H1 (cell line): ENCODE measurements at regions of chr5 and their contacts with region 1.

Region 1: GRCh38 chr5:149990518-149991376 is 9.7 kb downstream of the TIGD6 start:
- DNase-seq: peak in 1 of 2 experiments; percentile 65
- H3K4me3 ChIP-seq: no peak overlapping the region
- H3K27ac ChIP-seq: no peak overlapping the region
- H3K4me1 ChIP-seq: no peaks in the 10 kb centered on the region
- H3K27me3 ChIP-seq: no peaks in the 10 kb centered on the region
- CTCF ChIP-seq: peak; percentile 53 to 92 (median 89)
- EP300 ChIP-seq: no peak
- POLR2A ChIP-seq: no peak
- RAD21 ChIP-seq: peak; percentile 98

Region 2: DNA sequence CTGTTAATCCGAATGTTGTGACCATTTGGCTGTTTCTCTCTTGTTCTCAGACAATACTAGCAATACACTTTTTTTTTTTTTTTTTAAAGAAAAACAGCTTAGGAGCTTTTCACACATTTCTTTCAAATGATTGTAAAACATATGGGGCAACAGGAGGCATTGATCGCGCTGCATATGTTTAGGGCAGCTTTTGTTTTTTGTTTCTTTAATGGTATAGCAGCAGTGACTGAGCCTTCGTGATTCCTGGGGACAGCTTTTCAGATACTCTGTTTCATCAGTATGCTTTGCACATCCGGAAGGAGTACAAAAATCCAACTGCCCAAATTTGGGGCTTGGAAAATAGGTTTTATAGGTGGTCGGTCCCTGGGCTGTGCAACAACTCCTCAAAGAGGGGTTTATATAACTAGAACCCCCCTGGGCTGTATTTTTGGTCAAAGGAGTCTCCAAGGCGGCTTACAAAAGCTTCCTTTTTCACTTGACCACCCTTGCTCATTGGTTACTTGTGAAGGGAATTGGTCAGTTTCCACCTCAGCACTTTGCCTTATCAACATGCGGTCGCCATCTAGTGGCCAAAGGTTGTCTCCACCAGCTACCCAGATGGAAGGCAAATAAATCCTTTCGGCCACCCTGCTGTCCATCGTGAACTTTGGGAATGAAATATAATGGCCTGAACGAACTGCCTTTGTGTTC is 138.0 kb before region 1 on chr5:
- CTCF ChIA-PET with region 1: interaction called, 58 read pairs
- POLR2A ChIA-PET with region 1: no interaction called
- DNase-seq: peak; percentile 56 to 81
- H3K4me3 ChIP-seq: no peak overlapping the region
- H3K27ac ChIP-seq: no peak overlapping the region
- H3K4me1 ChIP-seq: peaks cover 0 to 2% (median 0%) of the 10 kb centered on the region in 4 experiments; a peak in 1 of 7 replicates
- H3K27me3 ChIP-seq: no peaks in the 10 kb centered on the region
- CTCF ChIP-seq: peak; percentile 79 to 96 (median 84)
- EP300 ChIP-seq: no peak
- POLR2A ChIP-seq: no peak
- RAD21 ChIP-seq: peak; percentile 67 to 83

Region 3: GRCh38 chr5:149915392-149916260 is 75.1 kb before region 1 on chr5:
- CTCF ChIA-PET with region 1: interaction called, 10 read pairs
- POLR2A ChIA-PET with region 1: no interaction called
- DNase-seq: no peak
- H3K4me3 ChIP-seq: no peak overlapping the region
- H3K27ac ChIP-seq: no peak overlapping the region
- H3K4me1 ChIP-seq: peaks cover 0 to 3% (median 0%) of the 10 kb centered on the region in 4 experiments; a peak in 1 of 7 replicates
- H3K27me3 ChIP-seq: no peaks in the 10 kb centered on the region
- CTCF ChIP-seq: no peak
- EP300 ChIP-seq: no peak
- POLR2A ChIP-seq: no peak
- RAD21 ChIP-seq: no peak

Region 4: DNA sequence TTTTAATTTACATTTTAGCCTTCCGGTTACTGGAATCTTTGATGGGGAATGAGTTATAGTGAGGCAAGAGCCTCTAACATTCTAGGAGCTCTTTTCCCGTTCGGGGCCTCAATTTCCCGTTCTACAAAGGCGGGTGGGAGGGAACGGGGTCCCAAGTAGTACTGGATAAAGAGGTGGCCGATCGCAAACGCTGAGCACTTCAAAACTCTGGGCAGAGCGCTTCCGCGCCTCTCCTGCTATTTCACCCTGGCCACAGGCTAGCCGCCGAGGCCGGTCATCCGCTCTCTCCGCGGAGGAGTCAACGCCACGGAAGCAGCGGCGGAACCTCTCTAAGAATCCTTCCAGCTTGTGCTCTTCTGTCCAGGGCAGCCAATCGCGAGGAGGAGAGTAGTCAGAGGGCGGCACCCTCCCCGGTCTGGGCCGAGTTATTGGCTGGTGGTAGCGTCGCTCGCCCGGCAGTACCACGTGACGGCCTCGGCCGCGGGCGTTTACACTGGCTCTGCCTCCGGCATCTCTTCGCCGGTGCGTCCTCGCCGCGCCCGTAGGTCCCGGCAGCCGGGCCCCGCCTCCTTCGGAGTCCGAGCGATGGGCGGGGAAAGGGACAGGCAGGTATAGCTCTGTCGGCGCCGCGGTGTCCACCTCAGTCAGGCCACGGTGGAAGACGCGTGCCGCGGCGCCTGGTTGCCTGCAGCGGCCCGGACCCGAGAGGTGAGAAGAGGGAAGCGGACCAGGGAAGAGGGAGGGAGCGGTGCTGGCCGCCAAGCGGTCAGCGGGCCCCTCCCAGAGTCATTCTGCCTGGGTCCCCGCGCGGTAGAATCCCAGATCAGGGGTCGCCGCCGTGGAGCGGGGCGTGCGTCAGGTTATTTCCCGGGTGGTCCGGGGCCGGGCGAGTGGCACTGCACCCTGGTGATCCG is 30.2 kb before region 1 on chr5 and contains the start of gene SLC26A2:
- CTCF ChIA-PET with region 1: interaction called, 41 read pairs
- POLR2A ChIA-PET with region 1: interaction called, 3 read pairs
- DNase-seq: peak; percentile 92 to 94
- H3K4me3 ChIP-seq: peak within 1 kb of the TSS; percentile 72 to 87 (median 80)
- H3K27ac ChIP-seq: peak within 1 kb of the TSS; percentile 26; the same call in 1 of the 2 replicates
- H3K4me1 ChIP-seq: peaks cover 0 to 8% (median 5%) of the 10 kb centered on the region in 4 experiments; a peak in 4 of 7 replicates
- H3K27me3 ChIP-seq: peaks cover 0 to 5% (median 1%) of the 10 kb centered on the region in 4 experiments; a peak in 3 of 7 replicates
- CTCF ChIP-seq: no peak
- EP300 ChIP-seq: no peak
- POLR2A ChIP-seq: peak; percentile 70 to 92
- RAD21 ChIP-seq: no peak
- total RNA-seq, gene SLC26A2: 10.9 and 11.4 TPM in 2 replicates

Region 5: GRCh38 chr5:149979896-149980295 is 10.9 kb before region 1 on chr5:
- CTCF ChIA-PET with region 1: interaction called, 26 read pairs
- POLR2A ChIA-PET with region 1: no interaction called
- DNase-seq: no peak
- H3K4me3 ChIP-seq: no peak overlapping the region
- H3K27ac ChIP-seq: no peak overlapping the region
- H3K4me1 ChIP-seq: no peaks in the 10 kb centered on the region
- H3K27me3 ChIP-seq: no peaks in the 10 kb centered on the region
- CTCF ChIP-seq: no peak
- EP300 ChIP-seq: no peak
- POLR2A ChIP-seq: no peak
- RAD21 ChIP-seq: no peak